Activated naive CD4-positive, alpha-beta T cell treated with anti-CD3 and anti-CD28 coated beads for 36 hours (primary cell): ENCODE measurements at regions of chr7 and their contacts with region 1.

Region 1: DNA sequence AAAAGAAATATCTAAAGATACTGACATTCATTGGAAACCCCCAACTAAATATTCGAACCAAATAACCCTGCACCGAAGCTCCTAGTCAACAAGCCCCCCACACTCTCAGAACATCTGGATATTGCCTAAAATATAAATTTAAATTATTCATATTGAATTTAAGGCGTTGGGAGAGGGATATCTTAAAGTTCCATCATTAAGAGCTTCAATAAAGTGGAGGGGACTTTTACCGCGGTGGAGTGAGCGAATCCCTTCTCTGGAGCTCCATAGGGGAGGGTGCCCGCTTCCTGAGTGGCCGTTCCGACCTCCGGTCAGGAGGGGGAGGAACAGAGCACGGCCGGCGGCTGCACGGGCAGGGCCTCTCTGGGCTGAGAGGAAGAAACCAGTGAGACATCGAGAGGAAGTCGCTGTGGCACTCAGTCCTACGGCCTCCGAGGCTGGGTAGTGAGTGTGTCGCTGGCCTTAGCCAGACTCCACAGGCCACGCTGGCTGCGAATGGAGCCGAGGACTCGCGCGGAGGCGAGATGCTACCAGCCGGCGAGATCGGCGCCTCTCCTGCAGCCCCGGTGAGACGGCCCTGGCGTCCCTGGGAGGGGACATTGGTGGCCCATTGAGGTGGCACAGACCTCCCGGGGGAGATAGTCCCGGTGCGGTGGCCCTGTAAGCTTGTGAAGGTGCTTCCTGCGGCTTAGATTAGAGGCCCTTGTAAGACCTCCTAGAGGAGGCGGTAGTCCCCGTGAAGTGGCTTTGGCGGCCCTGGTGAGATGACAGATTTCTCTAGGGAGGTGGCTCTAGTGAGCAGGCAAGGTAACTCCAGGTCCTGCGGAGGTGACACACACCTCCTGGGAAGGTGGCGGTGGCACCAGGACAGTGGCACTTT is at the start of gene RINT1:
- DNase-seq: peak; percentile 95
- H3K4me3 Mint-ChIP-seq: peak within 1 kb of the TSS; percentile 83
- H3K27ac Mint-ChIP-seq: peak within 1 kb of the TSS; percentile 85
- H3K4me1 Mint-ChIP-seq: peaks cover 23% of the 10 kb centered on the region
- H3K27me3 Mint-ChIP-seq: no peaks in the 10 kb centered on the region
- total RNA-seq, gene RINT1: 22.1 to 25.2 TPM

Region 2: GRCh38 chr7:104207731-104208420 is 1324.2 kb before region 1 on chr7 and contains the start of gene ORC5:
- CTCF ChIA-PET with region 1: no interaction called
- intact Hi-C with region 1: loop called (anchors 1 kb)
- DNase-seq: peak; percentile 80
- H3K4me3 Mint-ChIP-seq: peak within 1 kb of the TSS; percentile 93
- H3K27ac Mint-ChIP-seq: peak within 1 kb of the TSS; percentile 91
- H3K4me1 Mint-ChIP-seq: peaks cover 28% of the 10 kb centered on the region
- H3K27me3 Mint-ChIP-seq: peaks cover 8% of the 10 kb centered on the region
- total RNA-seq, gene ORC5: 19.9 to 21.2 TPM

Region 3: GRCh38 chr7:105461518-105461917 is 70.5 kb before region 1 on chr7:
- CTCF ChIA-PET with region 1: no interaction called
- intact Hi-C with region 1: no loop called
- DNase-seq: no peak
- H3K4me3 Mint-ChIP-seq: no peak overlapping the region
- H3K27ac Mint-ChIP-seq: no peak overlapping the region
- H3K4me1 Mint-ChIP-seq: no peaks in the 10 kb centered on the region
- H3K27me3 Mint-ChIP-seq: no peaks in the 10 kb centered on the region

Region 4: DNA sequence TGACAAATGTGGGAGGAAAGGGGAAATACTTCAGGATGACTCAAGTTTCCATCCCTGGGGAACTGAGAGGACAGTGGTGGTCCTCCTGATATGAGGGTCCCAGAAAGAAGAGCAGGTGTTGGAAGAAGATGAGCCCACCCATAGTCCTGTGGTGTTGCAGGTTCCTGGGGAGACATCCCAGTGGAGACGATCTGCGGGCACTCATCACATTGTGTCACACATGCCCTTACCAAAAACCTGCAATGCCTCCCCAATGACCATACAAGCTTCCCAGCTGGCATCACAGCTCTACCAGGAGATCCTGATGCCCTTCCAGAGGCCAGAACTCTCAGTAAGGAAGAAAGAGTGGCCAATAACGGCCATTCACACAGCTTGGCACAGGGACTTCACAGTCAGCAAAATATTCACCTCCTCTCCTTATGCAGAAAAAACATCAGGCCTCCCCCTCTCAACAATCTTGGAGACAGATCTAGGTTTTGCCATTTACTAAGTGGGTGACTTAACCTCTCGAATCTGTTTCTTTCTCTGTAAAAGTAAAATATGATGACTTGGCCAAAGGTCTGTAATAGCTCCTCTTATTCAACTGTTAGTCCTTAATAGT is 19.0 kb before region 1 on chr7:
- CTCF ChIA-PET with region 1: interaction called, 19 read pairs
- intact Hi-C with region 1: loop called (anchors 2 kb)
- DNase-seq: no peak
- H3K4me3 Mint-ChIP-seq: no peak overlapping the region
- H3K27ac Mint-ChIP-seq: peak overlapping the region; percentile 64
- H3K4me1 Mint-ChIP-seq: peaks cover 34% of the 10 kb centered on the region
- H3K27me3 Mint-ChIP-seq: no peaks in the 10 kb centered on the region

Region 5: GRCh38 chr7:105652359-105652993 is 120.4 kb after region 1 on chr7:
- CTCF ChIA-PET with region 1: interaction called, 12 read pairs
- intact Hi-C with region 1: no loop called
- DNase-seq: peak; percentile 79
- H3K4me3 Mint-ChIP-seq: no peak overlapping the region
- H3K27ac Mint-ChIP-seq: no peak overlapping the region
- H3K4me1 Mint-ChIP-seq: peaks cover 10% of the 10 kb centered on the region
- H3K27me3 Mint-ChIP-seq: no peaks in the 10 kb centered on the region

Region 6: GRCh38 chr7:105916603-105917002 is 384.6 kb after region 1 on chr7:
- CTCF ChIA-PET with region 1: no interaction called
- intact Hi-C with region 1: no loop called
- DNase-seq: no peak
- H3K4me3 Mint-ChIP-seq: no peak overlapping the region
- H3K27ac Mint-ChIP-seq: no peak overlapping the region
- H3K4me1 Mint-ChIP-seq: no peaks in the 10 kb centered on the region
- H3K27me3 Mint-ChIP-seq: no peaks in the 10 kb centered on the region

Region 7: GRCh38 chr7:106022193-106022821 is 490.3 kb after region 1 on chr7:
- CTCF ChIA-PET with region 1: no interaction called
- intact Hi-C with region 1: loop called (anchors 5 kb)
- DNase-seq: peak; percentile 82
- H3K4me3 Mint-ChIP-seq: peak overlapping the region; percentile 19
- H3K27ac Mint-ChIP-seq: peak overlapping the region; percentile 62
- H3K4me1 Mint-ChIP-seq: peaks cover 71% of the 10 kb centered on the region
- H3K27me3 Mint-ChIP-seq: no peaks in the 10 kb centered on the region

Region 8: DNA sequence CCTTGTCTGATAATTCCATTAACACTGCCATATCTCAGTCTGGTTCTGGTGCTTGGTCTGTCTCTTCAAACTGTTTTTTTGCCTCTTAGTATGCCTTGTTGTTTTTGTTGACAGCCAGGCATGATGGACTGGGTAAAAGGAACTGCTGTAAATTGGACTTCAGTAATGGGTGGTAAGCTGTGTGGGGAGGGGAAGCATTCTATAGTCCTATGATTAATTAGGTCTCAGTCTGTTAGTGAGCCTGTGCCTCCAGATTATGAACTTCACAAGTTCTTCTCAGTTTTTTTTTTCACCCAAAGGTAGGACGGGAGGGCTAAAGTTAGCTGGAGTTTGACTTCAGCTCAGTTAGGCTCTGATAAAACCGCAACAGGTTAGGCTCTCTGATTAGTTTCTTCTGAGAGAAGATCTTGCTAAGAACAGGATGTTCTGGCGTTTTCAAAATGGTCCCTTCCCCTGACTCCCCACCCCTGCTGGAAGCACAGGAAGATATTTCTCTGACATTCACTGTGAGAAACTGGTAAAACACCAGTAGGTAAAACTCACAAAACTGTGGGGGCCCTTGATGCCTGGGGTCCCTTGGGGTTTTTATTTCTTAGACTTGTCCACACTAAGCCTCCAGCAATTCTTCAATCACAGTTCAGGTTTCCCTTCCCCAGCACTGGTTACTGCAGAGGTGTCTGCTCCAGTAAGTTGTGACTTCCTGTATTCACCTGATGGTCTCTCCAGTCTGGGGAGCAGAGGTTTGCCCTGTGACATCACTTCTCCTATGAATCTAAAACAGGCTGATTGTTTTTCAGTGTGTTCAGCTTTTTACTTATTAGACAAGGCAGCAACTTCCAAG is 1172.2 kb after region 1 on chr7:
- CTCF ChIA-PET with region 1: no interaction called
- intact Hi-C with region 1: no loop called
- DNase-seq: peak; percentile 53
- H3K4me3 Mint-ChIP-seq: peak overlapping the region; percentile 3
- H3K27ac Mint-ChIP-seq: peak overlapping the region; percentile 50
- H3K4me1 Mint-ChIP-seq: peaks cover 24% of the 10 kb centered on the region
- H3K27me3 Mint-ChIP-seq: no peaks in the 10 kb centered on the region